GM12878 (cell line): ENCODE measurements at regions of chr9 and their contacts with region 1.

Region 1: DNA sequence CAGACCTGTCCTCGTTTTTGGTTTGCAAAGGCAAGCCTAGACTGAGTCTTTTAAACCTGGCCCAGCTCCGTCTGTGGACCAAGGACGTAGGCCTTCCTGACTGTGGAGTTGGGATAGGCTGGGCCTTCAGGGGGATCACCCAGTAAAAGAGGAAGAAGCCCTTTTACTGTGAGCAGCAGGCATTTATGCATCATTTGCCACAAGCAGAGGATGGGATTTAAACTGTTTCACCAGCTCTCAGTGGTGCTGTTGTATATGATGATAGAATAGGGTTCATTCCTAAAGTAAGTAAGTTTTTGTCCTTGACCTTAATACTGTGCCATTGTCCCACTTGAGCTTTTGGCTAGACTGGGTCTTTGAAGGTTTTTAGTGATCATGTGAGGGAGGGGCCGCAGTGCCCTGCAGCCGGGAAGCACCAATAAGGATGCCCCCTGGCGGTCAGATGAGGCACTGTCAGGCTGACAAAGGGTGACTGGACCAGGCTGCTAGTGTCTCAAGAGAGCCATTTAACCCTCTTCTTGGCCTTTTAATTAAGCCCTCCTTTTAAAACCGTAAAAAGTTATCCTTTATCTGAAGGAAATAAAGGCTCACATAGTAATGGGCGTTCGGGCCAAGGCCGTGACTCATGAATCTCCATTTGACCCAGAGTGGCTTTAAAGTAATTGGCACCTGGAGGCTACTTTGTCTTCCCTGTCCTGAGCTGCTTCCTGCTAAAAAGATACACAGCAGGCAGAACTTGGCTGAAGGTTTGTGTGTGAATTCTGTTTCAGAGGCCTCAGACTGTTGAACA is 74.0 kb downstream of the UBAP1 start:
- DNase-seq: no peak
- ATAC-seq: peak; percentile 94
- H3K4me3 ChIP-seq: no peak overlapping the region
- H3K27ac ChIP-seq: no peak overlapping the region
- H3K4me1 ChIP-seq: no peaks in the 10 kb centered on the region
- H3K27me3 ChIP-seq: no peaks in the 10 kb centered on the region
- CTCF ChIP-seq: peak; percentile 78 to 96 (median 95)
- EP300 ChIP-seq: no peak
- POLR2A ChIP-seq: peak; percentile 15; the same call in 1 of the 2 replicates
- RAD21 ChIP-seq: peak; percentile 60

Region 2: DNA sequence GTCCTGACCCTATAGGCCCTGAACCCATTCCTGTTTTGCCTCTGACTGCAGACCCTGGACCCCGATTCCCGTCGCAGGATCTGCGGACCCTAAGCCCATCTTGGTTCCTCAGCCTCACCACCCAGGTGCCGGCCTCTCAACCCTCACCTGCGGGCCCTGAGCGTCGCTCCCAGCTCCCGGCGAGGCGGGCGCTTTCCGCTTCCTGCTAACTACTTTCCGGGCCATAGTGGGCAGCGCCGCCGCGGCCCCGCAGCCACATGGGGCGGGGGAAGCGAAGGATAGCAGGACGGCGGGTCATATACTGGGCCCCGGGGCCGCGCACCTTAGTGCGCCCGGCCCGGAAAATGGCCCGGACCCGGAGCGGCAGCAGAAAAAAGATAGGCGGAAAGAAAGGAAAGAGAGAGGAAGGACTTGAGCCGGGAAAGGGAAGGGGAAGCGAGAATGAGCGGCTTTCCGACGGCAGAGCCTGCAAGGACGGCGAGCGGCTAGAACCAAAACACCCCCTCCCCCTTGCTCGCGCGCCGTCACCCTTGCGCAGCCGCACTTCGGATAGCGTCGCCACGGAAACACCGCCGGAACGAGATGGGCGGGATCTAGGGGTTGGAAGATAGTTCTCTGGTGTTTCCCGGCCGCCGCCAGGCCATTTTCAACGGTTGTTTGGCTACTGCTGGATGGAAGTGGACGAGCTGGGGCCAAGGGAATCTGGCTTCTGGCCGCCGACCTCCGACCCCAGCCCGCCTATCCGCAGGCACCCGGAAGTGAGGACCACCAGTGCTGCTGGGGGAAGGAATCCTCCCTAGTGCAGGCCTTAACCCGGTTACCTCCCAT is 126.4 kb before region 1 on chr9 and contains the start of gene DCAF12:
- CTCF ChIA-PET with region 1: interaction called, 7 read pairs
- POLR2A ChIA-PET with region 1: no interaction called
- RAD21 ChIA-PET with region 1: interaction called, 4 read pairs
- SMC1A ChIA-PET with region 1: interaction called, 3 read pairs
- in situ Hi-C with region 1: no loop called
- intact Hi-C with region 1: loop called (anchors 5 kb)
- DNase-seq: peak; percentile 75
- ATAC-seq: peak; percentile 90
- H3K4me3 ChIP-seq: peak within 1 kb of the TSS; percentile 97
- H3K27ac ChIP-seq: peak within 1 kb of the TSS; percentile 84
- H3K4me1 ChIP-seq: peaks cover 20% of the 10 kb centered on the region
- H3K27me3 ChIP-seq: no peaks in the 10 kb centered on the region
- CTCF ChIP-seq: no peak
- EP300 ChIP-seq: no peak
- POLR2A ChIP-seq: peak; percentile 77
- RAD21 ChIP-seq: no peak
- polyA plus RNA-seq, gene DCAF12: 11.7 TPM

Region 3: DNA sequence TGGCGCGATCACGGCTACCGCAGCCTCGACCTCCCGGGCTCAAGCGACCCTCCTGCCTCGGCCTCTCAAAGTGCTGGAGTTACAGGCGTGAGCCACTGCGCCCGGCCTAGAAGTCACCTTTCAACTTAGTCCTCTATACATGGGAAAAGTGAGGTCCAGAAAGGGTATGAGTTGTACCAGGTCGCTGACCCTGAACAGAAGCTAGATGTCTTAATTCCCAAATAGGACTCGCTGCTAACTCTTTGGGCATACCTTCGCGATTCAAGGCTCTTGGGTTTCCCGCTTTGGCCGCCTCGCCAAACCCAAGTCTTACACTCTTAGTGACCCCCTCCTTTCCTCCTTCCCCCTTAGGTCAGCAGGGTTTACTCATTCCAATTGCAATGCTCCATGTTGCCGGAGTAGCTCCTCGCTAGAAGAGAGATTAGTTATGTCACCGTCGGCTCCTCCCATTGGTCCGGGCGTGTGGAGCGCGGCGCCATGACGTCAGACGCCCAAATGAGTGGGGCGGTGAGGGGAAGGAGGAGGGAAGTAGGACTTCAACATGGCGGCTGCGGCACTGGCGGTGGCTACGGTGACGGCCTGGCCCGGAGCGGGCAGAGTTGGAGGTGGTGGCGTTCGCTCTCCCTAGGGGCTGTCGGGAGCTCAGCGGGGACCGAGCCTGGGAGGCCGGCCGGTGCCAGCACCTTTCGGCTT is 74.2 kb before region 1 on chr9 and contains the start of gene UBAP1:
- CTCF ChIA-PET with region 1: interaction called, 17 read pairs
- POLR2A ChIA-PET with region 1: interaction called, 3 read pairs
- RAD21 ChIA-PET with region 1: interaction called, 5 read pairs
- SMC1A ChIA-PET with region 1: no interaction called
- in situ Hi-C with region 1: no loop called
- intact Hi-C with region 1: no loop called
- DNase-seq: peak; percentile 88
- ATAC-seq: peak; percentile 99
- H3K4me3 ChIP-seq: peak within 1 kb of the TSS; percentile 90
- H3K27ac ChIP-seq: peak within 1 kb of the TSS; percentile 86
- H3K4me1 ChIP-seq: no peaks in the 10 kb centered on the region
- H3K27me3 ChIP-seq: no peaks in the 10 kb centered on the region
- CTCF ChIP-seq: no peak
- EP300 ChIP-seq: no peak
- POLR2A ChIP-seq: peak; percentile 99
- RAD21 ChIP-seq: no peak
- polyA plus RNA-seq, gene UBAP1: 2.1 to 2.9 TPM

Region 4: DNA sequence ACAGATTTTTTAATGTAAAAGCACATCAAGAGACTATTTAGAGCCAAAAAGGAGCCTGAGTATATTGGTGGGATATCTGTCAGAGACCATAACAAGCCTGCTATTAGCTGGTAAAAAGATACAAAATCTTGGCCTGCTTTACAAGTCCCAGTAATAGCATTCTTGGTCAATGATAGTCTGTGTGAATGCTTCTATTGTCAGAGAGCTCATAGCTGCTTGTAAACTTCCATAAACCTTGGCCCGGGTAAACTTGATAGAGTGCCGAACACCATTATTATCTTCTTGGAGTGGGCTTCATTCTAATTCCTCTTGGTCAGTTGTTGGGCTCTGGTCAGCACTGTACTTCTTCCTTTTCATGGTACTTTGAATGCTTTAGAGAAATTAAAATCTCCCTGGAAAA is 10.0 kb before region 1 on chr9:
- CTCF ChIA-PET with region 1: interaction called, 14 read pairs
- POLR2A ChIA-PET with region 1: no interaction called
- RAD21 ChIA-PET with region 1: no interaction called
- SMC1A ChIA-PET with region 1: interaction called, 11 read pairs
- in situ Hi-C with region 1: no loop called
- intact Hi-C with region 1: no loop called
- DNase-seq: no peak
- ATAC-seq: no peak
- H3K4me3 ChIP-seq: no peak overlapping the region
- H3K27ac ChIP-seq: no peak overlapping the region
- H3K4me1 ChIP-seq: no peaks in the 10 kb centered on the region
- H3K27me3 ChIP-seq: no peaks in the 10 kb centered on the region
- CTCF ChIP-seq: no peak
- EP300 ChIP-seq: no peak
- POLR2A ChIP-seq: no peak
- RAD21 ChIP-seq: no peak

Region 5: GRCh38 chr9:34311499-34312185 is 58.8 kb after region 1 on chr9:
- CTCF ChIA-PET with region 1: no interaction called
- POLR2A ChIA-PET with region 1: no interaction called
- RAD21 ChIA-PET with region 1: no interaction called
- SMC1A ChIA-PET with region 1: no interaction called
- in situ Hi-C with region 1: no loop called
- intact Hi-C with region 1: no loop called
- DNase-seq: no peak
- ATAC-seq: no peak
- H3K4me3 ChIP-seq: no peak overlapping the region
- H3K27ac ChIP-seq: no peak overlapping the region
- H3K4me1 ChIP-seq: no peaks in the 10 kb centered on the region
- H3K27me3 ChIP-seq: no peaks in the 10 kb centered on the region
- CTCF ChIP-seq: no peak
- EP300 ChIP-seq: no peak
- POLR2A ChIP-seq: no peak
- RAD21 ChIP-seq: no peak

Region 6: DNA sequence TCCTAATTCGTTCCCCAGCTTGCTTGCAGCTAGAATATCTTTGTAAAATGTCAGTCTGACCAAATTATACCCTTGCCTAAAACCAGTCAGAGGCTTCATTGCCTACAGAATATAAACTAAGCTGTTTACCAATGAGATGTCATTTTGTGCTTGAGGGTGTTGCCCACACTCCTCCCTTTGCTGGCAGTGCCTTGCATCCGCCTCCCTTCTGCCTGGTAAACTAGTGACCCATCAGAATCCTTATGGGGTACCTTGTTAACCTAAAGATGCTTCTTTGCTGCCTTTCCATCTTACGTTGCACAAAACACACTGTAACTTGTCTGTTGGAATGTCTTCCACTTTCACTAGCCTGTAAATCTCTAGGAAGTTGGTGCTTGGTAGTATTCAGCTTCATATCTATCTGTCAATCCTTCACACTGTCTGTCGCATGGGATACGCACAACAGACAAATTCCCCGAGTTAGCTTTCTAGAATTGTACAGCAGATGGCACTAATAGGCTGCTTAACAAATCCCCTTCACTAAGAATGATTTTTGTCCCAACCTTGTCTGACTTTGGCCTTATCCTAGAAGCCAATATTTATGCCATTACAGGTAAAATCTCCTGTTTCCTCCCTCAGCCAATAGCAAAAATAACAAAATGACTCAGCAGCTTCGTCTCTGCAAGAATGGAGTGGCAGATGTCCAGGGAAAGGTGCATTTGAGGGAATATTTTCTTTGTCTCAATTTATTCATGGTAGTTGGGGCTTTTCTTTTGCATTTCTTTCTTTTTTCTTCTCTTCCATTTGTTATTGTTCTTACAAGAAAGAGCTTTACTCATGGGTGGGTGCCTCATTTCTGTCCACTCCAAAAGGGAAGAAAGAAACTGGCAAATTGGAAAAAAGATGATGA is 79.5 kb after region 1 on chr9:
- CTCF ChIA-PET with region 1: interaction called, 10 read pairs
- POLR2A ChIA-PET with region 1: no interaction called
- RAD21 ChIA-PET with region 1: interaction called, 4 read pairs
- SMC1A ChIA-PET with region 1: interaction called, 3 read pairs
- in situ Hi-C with region 1: no loop called
- intact Hi-C with region 1: no loop called
- DNase-seq: peak; percentile 12
- ATAC-seq: no peak
- H3K4me3 ChIP-seq: no peak overlapping the region
- H3K27ac ChIP-seq: no peak overlapping the region
- H3K4me1 ChIP-seq: no peaks in the 10 kb centered on the region; the same call in 1 of the 2 replicates
- H3K27me3 ChIP-seq: no peaks in the 10 kb centered on the region
- CTCF ChIP-seq: peak; percentile 40 to 61 (median 42); a peak in 4 of 6 replicates
- EP300 ChIP-seq: no peak
- POLR2A ChIP-seq: no peak
- RAD21 ChIP-seq: peak; percentile 55